WTC11 (cell line): ENCODE measurements at regions of chr4 and their contacts with region 1.

Region 1: GRCh38 chr4:154779362-154779947 is 1.6 kb upstream of the RBM46 start:
- DNase-seq: no peak
- ATAC-seq: peak; percentile 44
- H3K4me3 Mint-ChIP-seq: no peak overlapping the region
- H3K27ac Mint-ChIP-seq: no peak overlapping the region
- H3K4me1 Mint-ChIP-seq: peaks cover 19% of the 10 kb centered on the region
- H3K27me3 Mint-ChIP-seq: no peaks in the 10 kb centered on the region
- CTCF ChIP-seq: peak; percentile 59

Region 2: GRCh38 chr4:154686838-154687237 is 92.6 kb before region 1 on chr4:
- CTCF ChIA-PET with region 1: interaction called, 15 read pairs
- POLR2A ChIA-PET with region 1: no interaction called
- DNase-seq: no peak
- ATAC-seq: no peak
- H3K4me3 Mint-ChIP-seq: no peak overlapping the region
- H3K27ac Mint-ChIP-seq: no peak overlapping the region
- H3K4me1 Mint-ChIP-seq: no peaks in the 10 kb centered on the region
- H3K27me3 Mint-ChIP-seq: no peaks in the 10 kb centered on the region
- CTCF ChIP-seq: no peak

Region 3: GRCh38 chr4:154743683-154744340 is 35.6 kb before region 1 on chr4 and contains the start of gene LRAT:
- CTCF ChIA-PET with region 1: interaction called, 10 read pairs
- POLR2A ChIA-PET with region 1: no interaction called
- DNase-seq: peak; percentile 90
- ATAC-seq: peak; percentile 76
- H3K4me3 Mint-ChIP-seq: peak within 1 kb of the TSS; percentile 95
- H3K27ac Mint-ChIP-seq: peak within 1 kb of the TSS; percentile 89
- H3K4me1 Mint-ChIP-seq: peaks cover 62% of the 10 kb centered on the region
- H3K27me3 Mint-ChIP-seq: peaks cover 38% of the 10 kb centered on the region
- CTCF ChIP-seq: peak; percentile 33
- total RNA-seq, gene LRAT: 33.0 to 37.7 TPM (median 34.5 TPM) in 3 replicates

Region 4: DNA sequence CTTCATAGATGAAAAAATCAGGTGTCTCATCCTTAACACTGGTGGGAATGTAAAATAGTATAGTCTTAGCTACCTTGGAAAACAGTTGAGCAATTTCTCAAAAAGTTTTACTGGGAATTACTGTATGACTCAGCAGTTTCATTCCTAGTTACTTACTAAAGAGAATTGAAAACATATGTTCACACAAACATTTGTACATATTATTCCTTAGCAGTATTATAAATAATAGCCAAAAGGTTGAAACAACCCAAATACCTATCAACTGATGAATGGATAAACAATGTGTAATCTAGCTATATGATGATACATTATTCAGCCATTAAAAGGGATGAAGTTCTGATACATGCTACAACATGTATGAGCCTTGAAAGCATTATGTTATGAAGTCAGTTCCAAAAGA is 43.3 kb after region 1 on chr4:
- CTCF ChIA-PET with region 1: no interaction called
- POLR2A ChIA-PET with region 1: no interaction called
- DNase-seq: no peak
- ATAC-seq: no peak
- H3K4me3 Mint-ChIP-seq: no peak overlapping the region
- H3K27ac Mint-ChIP-seq: no peak overlapping the region
- H3K4me1 Mint-ChIP-seq: no peaks in the 10 kb centered on the region
- H3K27me3 Mint-ChIP-seq: no peaks in the 10 kb centered on the region
- CTCF ChIP-seq: no peak